AG04449 (cell line): ENCODE measurements at regions of chr19 and their contacts with region 1.

Region 1: DNA sequence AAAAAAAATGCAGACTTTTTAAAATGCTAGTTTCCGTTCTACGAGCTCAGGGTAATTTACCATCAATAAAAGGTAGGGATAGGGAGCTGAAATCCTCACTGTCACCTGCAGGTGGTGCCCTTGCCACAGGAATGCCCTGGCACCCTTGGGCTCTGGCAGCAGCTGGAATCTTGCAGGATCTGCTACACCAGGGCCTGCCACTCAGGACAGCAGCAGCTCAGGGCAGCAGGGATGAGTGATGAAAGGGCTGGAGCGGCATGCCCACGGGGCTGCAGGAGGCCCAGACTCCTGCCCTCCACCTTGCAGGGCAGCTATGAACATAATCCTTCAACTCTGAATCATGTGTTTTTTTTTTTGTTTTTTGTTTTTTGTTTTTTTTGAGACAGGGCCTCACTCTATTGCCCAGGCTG is 54.0 kb downstream of the GNG7 start:
- DNase-seq: peak; percentile 10
- H3K4me3 ChIP-seq: no peak overlapping the region
- CTCF ChIP-seq: peak; percentile 77

Region 2: DNA sequence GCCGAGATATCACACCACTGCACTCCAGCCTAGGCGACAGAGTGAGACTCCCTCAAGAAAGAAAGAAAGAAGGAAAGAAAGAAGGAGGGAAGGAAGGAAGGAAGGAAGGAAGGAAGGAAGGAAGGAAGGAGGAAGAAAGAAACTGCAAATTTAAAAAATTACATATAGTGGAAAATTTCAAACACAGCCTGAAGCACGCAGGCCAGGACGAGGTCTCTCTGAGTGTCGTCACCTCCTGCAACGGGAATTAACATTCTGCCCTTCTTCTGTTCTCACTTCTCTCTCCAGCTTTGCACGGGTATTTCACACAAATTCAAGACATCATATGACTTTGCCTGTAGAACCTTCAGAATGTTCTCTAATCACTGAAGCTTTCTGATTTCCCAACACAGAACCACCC is 54.2 kb before region 1 on chr19:
- CTCF ChIA-PET with region 1: no interaction called
- POLR2A ChIA-PET with region 1: no interaction called
- DNase-seq: no peak
- H3K4me3 ChIP-seq: no peak overlapping the region
- CTCF ChIP-seq: no peak

Region 3: DNA sequence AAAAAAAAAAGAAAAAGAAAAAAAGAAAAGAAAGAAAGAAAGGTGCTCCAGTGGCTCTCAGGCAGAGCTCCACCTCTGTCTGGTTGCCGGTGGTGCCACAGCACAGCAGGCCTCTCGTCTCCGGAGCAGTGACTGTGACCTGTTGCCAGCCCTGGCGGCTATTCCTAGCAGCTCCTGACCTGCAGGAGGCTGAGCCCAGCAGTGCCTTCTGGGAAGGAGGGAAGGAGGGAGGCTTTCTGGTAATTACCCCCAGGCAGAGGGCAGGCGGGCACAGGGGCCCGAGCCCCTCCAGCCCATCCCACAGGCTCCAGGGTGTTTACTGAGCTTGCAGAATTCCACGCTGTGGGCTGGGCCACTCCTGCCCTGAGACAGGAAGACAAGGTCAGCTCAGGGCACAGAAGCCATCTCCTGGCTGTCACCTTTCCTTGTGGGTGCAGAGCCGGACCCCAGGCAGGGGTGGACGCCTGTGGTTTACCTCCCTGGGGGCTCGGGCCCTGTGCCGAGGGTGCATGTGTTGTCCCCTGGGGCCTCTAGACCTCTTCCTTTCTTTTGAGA is 23.9 kb before region 1 on chr19:
- CTCF ChIA-PET with region 1: no interaction called
- POLR2A ChIA-PET with region 1: no interaction called
- DNase-seq: no peak
- H3K4me3 ChIP-seq: no peak overlapping the region
- CTCF ChIP-seq: no peak

Region 4: DNA sequence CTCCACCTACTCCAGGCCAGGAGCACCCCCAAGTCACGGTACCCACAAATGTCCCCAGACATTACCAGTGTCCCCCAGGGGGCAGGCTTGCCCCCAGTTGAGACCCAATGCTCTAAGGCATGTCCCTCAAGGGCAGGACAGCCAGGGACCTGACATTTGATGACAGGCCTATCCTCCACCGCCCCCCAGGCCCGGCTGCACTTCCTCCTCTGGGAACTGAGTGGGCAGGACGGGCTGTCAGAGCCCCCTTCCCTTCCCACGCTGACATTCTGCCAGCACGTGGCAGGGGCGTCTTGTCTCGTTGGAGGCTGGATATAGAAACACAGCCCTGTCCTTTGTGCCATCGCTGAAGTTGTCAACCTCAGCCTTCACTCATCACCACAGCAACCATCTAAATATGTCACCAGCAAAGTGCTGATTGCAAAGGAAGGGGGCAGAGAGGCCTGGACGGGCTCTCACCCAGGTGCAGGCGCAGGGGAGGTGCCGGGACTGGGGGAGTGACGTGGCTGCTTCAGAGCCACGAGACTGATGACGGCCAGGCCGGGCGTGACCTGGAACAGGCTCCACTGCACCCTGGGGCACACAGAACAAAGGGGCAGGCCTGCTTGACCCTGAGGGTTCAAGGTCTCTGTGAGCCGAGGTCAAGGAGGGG is 15.5 kb after region 1 on chr19:
- CTCF ChIA-PET with region 1: interaction called, 45 read pairs
- POLR2A ChIA-PET with region 1: no interaction called
- DNase-seq: no peak
- H3K4me3 ChIP-seq: no peak overlapping the region
- CTCF ChIP-seq: no peak

Region 5: DNA sequence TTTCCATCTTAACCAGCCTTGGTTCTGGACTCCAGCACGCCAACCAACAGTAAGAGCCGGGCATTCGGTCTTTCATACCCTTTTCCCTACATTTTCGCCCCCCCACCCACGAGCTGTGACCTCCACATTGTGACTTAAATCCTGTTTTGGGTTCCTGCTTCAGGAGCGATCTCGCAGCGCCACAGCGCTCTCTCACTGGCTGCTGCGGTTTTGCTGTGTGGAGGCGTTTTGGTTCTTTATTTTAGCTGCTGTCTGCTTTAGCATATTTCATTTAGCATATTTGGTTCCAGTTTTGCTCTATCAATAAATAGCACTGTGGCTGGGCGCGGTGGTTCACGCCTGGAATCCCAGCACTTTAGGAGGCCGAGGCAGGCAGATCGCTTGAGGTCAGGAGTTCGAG is 110.8 kb after region 1 on chr19:
- CTCF ChIA-PET with region 1: interaction called, 287 read pairs
- POLR2A ChIA-PET with region 1: no interaction called
- DNase-seq: no peak
- H3K4me3 ChIP-seq: no peak overlapping the region
- CTCF ChIP-seq: no peak

Region 6: DNA sequence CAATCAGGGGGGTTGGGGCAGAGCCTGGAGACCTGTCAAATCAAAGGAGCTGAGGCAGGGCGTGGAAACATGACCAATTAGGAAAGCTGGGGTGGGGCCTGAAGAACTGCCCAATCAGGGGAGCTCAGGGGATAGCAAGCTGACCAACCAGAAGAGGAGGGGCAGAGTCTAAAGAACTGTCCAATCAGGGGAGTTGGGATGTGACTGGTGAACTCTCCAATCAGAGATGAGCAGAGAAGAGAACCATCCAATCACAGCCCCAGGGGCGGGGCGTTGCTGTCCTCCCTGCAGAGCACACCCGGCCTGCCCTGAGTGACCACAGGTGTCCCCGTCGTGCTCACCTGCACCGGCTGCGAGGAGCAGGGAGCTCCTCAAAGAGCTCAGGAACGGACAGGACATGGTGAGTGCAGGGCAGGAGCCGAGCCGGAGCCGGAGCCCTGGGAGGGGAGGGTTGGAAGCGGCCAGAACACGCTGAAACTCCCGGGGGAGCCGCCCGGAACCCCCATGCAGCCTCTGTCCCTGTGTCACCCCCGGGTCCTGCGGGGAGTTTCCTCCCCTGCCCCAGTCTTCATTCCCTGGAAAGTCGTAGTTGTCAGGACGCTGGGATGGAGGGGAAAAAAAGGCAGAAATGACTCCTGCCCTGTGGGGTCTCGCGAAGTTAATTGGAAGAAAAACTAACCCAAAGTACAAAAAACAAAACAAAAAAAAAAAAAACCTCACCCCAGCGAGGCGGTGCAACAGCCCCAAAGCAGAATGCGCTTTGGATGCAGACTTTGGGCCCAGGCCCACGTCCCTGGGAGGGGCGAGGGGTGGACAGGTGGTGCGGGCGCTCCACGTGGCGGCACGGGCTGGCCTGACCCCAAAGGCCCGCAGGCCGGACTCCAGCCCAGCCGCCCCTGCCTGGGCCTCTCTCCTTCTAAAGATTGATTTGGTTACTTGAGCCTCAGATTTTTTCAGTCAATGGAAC is 218.8 kb after region 1 on chr19 and contains the start of gene ZNF556:
- CTCF ChIA-PET with region 1: interaction called, 19 read pairs
- POLR2A ChIA-PET with region 1: no interaction called
- DNase-seq: no peak
- H3K4me3 ChIP-seq: no peak within 1 kb of the TSS
- CTCF ChIP-seq: no peak

Region 7: GRCh38 chr19:2950286-2951124 is 302.0 kb after region 1 on chr19:
- CTCF ChIA-PET with region 1: interaction called, 20 read pairs
- POLR2A ChIA-PET with region 1: no interaction called
- DNase-seq: peak; percentile 95
- H3K4me3 ChIP-seq: peak overlapping the region; percentile 94
- CTCF ChIP-seq: no peak